HEK293 (cell line): ENCODE measurements at regions of chr16 and their contacts with region 1.

Region 1: DNA sequence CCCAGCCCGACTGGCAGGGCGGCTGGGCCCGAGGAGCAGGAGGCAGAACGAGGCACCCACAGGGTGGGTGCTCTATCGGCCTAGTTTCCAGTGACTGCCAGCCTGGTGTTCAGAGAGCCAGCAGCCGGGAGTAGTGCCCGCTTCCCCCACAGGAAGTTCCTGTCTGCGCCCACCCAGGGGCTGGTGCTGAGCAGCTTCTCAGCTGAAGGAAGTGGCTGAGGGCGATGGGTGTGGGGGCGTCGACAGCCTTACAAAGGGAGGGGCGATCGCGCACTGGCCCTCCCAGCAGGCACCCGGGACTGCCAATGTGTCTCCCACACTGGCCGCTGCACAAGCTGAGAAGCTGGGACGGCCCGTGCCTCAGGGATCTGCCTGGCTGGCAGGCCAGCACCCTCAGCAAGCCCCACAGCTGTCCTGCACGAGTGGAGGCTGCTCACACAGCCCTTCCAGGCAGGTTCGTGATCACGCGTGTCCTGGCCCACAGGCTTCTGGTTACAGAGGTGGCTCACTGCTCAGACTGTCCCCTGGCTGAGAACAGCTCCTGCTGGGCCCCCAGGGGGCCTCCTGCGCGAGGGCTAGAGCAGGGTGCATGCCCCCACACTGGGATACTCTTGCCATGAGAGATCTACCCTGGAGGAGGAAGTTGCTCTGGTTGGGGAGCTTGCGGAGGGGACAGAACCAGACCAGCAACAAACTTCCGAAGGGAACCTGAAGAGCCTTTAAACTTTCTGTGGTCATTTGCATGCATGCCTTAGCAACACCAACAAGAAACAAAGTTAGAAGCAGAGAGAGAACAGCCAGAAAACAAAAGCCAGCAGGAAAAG is 2.5 kb downstream of the RNF166 start:
- H3K4me3 ChIP-seq: no peak overlapping the region
- H3K27ac ChIP-seq: no peak overlapping the region
- H3K4me1 ChIP-seq: no peaks in the 10 kb centered on the region
- CTCF ChIP-seq: no peak

Region 2: GRCh38 chr16:88510091-88510994 is 193.4 kb before region 1 on chr16:
- CTCF ChIA-PET with region 1: no interaction called
- POLR2A ChIA-PET with region 1: no interaction called
- H3K4me3 ChIP-seq: no peak overlapping the region
- H3K27ac ChIP-seq: peak overlapping the region; percentile 48; the same call in 1 of the 2 replicates
- H3K4me1 ChIP-seq: peaks cover 11% of the 10 kb centered on the region
- CTCF ChIP-seq: no peak

Region 3: GRCh38 chr16:88650749-88651275 is 52.9 kb before region 1 on chr16 and contains the start of gene CYBA:
- CTCF ChIA-PET with region 1: no interaction called
- POLR2A ChIA-PET with region 1: no interaction called
- H3K4me3 ChIP-seq: peak within 1 kb of the TSS; percentile 75
- H3K27ac ChIP-seq: peak within 1 kb of the TSS; percentile 73; the same call in 1 of the 2 replicates
- H3K4me1 ChIP-seq: peaks cover 7% of the 10 kb centered on the region; the same call in 1 of the 2 replicates
- CTCF ChIP-seq: no peak

Region 4: DNA sequence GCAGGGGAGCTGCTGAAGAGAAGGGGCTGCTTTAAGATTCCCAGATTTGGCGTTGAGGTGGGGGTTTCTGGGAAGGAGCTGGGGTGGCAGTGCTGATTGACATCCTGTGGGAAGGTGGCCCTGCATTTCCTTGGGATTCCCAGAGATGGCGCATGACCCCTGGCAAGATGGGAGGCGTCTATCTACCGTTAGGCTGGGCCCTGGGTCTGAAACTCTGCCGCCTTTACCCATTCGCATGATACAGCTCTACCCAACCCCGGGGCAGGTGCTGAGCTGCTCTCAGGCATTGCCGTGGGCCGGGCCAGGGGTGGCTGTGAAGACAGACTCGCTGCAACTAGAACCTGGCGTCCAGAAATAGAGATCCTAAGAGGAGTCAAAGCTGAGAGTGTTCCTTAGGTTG is 30.9 kb before region 1 on chr16:
- CTCF ChIA-PET with region 1: no interaction called
- POLR2A ChIA-PET with region 1: interaction called, 10 read pairs
- H3K4me3 ChIP-seq: no peak overlapping the region
- H3K27ac ChIP-seq: no peak overlapping the region
- H3K4me1 ChIP-seq: no peaks in the 10 kb centered on the region
- CTCF ChIP-seq: peak; percentile 61; the same call in 1 of the 2 replicates